Naive thymus-derived CD8-positive, alpha-beta T cell (primary cell): ENCODE measurements at regions of chr1 and their contacts with region 1.

Region 1: DNA sequence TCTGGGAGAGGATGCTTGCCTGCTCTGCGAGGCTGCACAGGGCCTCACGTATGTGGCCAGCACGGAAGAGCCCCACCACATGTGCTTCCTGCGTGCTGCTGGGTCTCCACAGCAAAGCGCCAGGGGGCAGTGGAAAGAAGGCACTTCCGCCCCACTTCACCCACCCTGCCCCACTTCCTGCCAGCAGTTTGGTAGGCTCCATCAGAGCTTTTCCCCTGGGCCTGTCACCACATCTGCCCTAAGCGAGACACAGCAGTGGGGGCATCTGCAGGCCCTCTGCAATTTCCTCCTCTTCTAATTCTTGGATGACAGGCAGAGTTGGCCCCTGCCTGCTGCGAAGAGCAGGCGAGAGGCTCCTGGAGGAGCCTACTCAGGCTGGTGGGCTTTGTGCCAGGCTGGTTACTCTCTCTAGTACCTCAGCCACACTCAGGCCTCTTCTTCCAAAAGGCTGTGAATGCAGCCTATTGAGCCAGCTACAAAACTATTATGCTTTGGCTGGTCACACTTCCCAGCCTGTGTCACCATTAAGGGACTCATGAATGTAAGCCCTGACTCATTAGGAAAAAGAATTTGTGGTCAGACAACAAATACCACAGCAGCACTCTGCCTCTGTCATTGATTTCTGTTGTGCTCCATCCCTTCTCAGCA is 25.0 kb downstream of the CD244 start:
- DNase-seq: peak; percentile 66 to 93 (median 86)
- ATAC-seq: peak; percentile 96 to 98
- H3K4me3 Mint-ChIP-seq: peak overlapping the region; percentile 73 to 92 (median 86)
- H3K27ac Mint-ChIP-seq: peak overlapping the region; percentile 85 to 96 (median 94)
- H3K4me1 Mint-ChIP-seq: peaks cover 43 to 93% (median 85%) of the 10 kb centered on the region in 4 donors
- H3K27me3 Mint-ChIP-seq: no peaks in the 10 kb centered on the region

Region 2: GRCh38 chr1:160855181-160855981 is 17.7 kb after region 1 on chr1:
- POLR2A ChIA-PET with region 1: interaction called, 14 read pairs
- DNase-seq: peak in 2 of 10 donors; percentile 26
- ATAC-seq: peak; percentile 75 to 79
- H3K4me3 Mint-ChIP-seq: no peak overlapping the region
- H3K27ac Mint-ChIP-seq: no peak overlapping the region
- H3K4me1 Mint-ChIP-seq: peaks cover 9 to 25% (median 17%) of the 10 kb centered on the region in 4 donors
- H3K27me3 Mint-ChIP-seq: no peaks in the 10 kb centered on the region

Region 3: DNA sequence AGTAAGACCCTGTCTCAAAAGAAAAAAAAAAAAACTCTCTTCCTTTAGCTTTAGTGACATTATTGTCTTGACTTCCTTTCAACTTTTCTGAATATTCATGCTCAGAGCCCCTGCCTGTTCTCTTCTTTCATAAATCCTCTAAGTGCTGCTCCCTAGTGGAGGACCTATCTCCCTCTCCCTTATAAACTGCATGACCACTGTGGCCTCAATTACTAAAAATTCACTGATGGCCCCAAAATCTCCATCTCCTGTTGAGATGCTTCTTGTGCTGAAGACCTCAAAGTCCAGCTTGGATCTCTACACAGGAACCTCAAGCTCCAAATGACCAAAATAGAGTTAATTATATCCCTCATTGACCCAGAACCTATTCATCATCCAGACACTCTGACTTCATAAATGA is 39.5 kb after region 1 on chr1:
- POLR2A ChIA-PET with region 1: interaction called, 13 read pairs
- DNase-seq: peak in 5 of 10 donors; percentile 10 to 70 (median 53)
- ATAC-seq: peak; percentile 90 to 94
- H3K4me3 Mint-ChIP-seq: peak overlapping the region in 4 of 10 donors; percentile 7 to 29 (median 10)
- H3K27ac Mint-ChIP-seq: peak overlapping the region in 3 of 10 donors; percentile 0 to 19 (median 5)
- H3K4me1 Mint-ChIP-seq: peaks cover 16 to 42% (median 32%) of the 10 kb centered on the region in 4 donors
- H3K27me3 Mint-ChIP-seq: no peaks in the 10 kb centered on the region

Region 4: DNA sequence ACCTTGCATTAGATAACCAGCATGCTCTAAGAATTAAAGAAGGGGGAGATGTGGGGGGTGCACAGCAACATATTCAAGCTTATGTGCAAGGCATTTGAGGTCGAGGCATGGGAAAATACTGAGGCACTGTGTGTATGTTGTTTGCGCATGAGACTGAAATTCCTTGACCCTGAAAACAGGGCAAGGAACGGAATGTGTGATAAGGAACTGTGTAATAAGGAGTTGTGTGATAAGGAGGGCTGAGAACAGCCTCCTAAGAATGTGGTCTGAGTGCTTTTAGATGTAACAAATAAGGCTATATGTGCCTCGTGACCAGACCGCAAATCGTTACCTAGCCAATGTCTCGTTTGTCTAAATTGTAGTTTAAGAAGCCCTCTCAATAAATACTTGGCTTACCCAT is 73.8 kb after region 1 on chr1:
- POLR2A ChIA-PET with region 1: no interaction called
- DNase-seq: no peak
- ATAC-seq: no peak
- H3K4me3 Mint-ChIP-seq: no peak overlapping the region
- H3K27ac Mint-ChIP-seq: no peak overlapping the region
- H3K4me1 Mint-ChIP-seq: peaks cover 0 to 5% (median under 1%) of the 10 kb centered on the region in 4 donors
- H3K27me3 Mint-ChIP-seq: peaks cover 0 to 3% (median 0%) of the 10 kb centered on the region in 5 donors